GM18951 (cell line): ENCODE measurements at regions of chr1 and their contacts with region 1.

Region 1: GRCh38 chr1:120133228-120133925 is 42.9 kb downstream of the SEC22B start:
- POLR2A ChIP-seq: no peak

Region 2: GRCh38 chr1:119968068-119968492 is 165.3 kb before region 1 on chr1:
- in situ Hi-C with region 1: loop called (anchors 25 kb)
- POLR2A ChIP-seq: no peak